Head of caudate nucleus (tissue), 42 donors: ENCODE measurements at regions of chr6 and their contacts with region 1.

Region 1: DNA sequence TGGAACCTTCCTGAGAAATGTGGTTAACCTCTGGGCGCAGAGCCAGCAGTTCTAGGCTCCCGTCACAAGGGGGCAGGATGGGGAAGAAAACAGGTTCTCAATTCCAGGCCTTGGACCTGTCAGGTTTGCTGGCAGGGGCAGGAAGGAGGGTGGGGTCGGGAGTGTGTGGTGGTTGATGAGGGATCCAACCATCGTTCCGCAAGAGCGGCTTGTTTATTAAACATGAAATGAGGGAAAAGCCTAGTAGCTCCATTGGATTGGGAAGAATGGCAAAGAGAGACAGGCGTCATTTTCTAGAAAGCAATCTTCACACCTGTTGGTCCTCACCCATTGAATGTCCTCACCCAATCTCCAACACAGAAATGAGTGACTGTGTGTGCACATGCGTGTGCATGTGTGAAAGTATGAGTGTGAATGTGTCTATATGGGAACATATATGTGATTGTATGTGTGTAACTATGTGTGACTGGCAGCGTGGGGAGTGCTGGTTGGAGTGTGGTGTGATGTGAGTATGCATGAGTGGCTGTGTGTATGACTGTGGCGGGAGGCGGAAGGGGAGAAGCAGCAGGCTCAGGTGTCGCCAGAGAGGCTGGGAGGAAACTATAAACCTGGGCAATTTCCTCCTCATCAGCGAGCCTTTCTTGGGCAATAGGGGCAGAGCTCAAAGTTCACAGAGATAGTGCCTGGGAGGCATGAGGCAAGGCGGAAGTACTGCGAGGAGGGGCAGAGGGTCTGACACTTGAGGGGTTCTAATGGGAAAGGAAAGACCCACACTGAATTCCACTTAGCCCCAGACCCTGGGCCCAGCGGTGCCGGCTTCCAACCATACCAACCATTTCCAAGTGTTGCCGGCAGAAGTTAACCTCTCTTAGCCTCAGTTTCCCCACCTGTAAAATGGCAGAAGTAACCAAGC is 29.6 kb downstream of the SRSF3 start:
- DNase-seq: peak; percentile 58 to 93 (median 84)

Region 2: DNA sequence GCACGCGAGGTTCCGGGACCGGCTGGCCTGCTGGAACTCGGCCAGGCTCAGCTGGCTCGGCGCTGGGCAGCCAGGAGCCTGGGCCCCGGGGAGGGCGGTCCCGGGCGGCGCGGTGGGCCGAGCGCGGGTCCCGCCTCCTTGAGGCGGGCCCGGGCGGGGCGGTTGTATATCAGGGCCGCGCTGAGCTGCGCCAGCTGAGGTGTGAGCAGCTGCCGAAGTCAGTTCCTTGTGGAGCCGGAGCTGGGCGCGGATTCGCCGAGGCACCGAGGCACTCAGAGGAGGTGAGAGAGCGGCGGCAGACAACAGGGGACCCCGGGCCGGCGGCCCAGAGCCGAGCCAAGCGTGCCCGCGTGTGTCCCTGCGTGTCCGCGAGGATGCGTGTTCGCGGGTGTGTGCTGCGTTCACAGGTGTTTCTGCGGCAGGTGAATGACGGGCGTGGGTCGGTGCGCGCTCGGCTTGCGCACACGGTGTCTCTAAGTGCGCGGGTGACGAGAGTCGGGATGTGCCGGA is 54.8 kb after region 1 on chr6 and contains the start of gene CDKN1A:
- intact Hi-C with region 1: loop called (anchors 2 kb)
- DNase-seq: peak; percentile 56 to 93 (median 83)

Region 3: GRCh38 chr6:36759148-36759759 is 135.5 kb after region 1 on chr6:
- intact Hi-C with region 1: loop called (anchors 5 kb)
- DNase-seq: peak; percentile 68 to 93 (median 86)